ENCODE measurements at regions of chr7 and their contacts with region 1.

Region 1: GRCh38 chr7:107743567-107744344 is at the start of gene CBLL1:
- DNase-seq: peak; percentile 95 to 96
- ATAC-seq: peak; percentile 92 to 95
- H3K4me3 ChIP-seq: peak within 1 kb of the TSS; percentile 75 to 96 (median 91)
- H3K27ac ChIP-seq: peak within 1 kb of the TSS; percentile 92 to 100 (median 95)
- H3K4me1 ChIP-seq: peaks cover 38 to 45% of the 10 kb centered on the region in 2 donors
- H3K27me3 ChIP-seq: no peaks in the 10 kb centered on the region
- CTCF ChIP-seq: peak; percentile 69 to 85 (median 83)
- POLR2A ChIP-seq: peak; percentile 65 to 83
- total RNA-seq, gene CBLL1: 21.6 to 49.6 (median 34.8) TPM

Region 2: DNA sequence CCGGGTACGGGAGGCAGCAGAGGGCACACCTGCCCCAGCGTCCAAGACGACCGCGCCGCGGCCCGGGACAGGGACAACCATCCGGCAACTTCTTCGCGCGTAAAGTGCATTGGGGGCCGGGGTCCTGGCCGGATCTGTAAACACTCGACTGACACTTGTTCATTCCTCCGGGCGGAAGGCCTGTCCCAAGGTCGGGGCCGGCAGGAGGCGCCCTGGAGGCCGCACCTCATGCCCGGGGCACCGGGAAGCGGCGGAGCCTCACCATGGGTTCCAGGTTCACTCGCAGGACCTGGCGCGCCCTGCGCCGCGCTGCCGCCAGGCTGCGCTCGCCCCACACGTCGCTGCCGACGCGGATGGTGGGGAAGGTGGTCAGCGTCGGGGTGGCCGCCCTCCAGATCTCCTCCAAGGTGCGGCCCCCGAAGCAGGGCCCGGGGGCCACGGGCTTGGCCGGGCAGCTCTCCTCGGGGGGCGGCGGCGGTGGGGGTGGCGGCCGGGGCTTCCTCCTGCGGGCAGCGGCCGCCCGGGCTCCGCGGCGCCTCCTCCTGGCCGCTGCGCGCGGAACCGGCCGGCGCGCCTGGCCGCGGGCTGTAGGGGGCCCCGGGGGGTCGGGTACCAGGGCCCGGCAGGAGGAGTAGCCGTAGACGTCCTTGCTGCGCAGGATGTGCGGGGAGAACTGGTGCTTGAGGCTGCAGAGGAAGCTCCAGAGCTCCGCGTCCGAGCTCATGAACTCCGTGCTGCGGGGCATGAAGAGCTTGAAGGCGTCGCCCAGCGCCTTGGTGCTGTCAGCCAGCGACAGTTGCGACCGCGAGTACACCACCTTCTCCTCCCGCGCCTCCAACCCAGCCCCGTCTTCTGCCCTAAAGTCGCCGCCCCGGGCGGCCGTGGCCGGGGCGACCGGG is 1083.5 kb before region 1 on chr7:
- in situ Hi-C with region 1: no loop called
- intact Hi-C with region 1: loop called (anchors 5 kb)
- DNase-seq: peak; percentile 23 to 59
- ATAC-seq: peak; percentile 57 to 66
- H3K4me3 ChIP-seq: peak overlapping the region; percentile 60 to 89 (median 78)
- H3K27ac ChIP-seq: peak overlapping the region; percentile 82 to 91 (median 88)
- H3K4me1 ChIP-seq: peaks cover 8 to 12% of the 10 kb centered on the region in 2 donors
- H3K27me3 ChIP-seq: no peaks in the 10 kb centered on the region
- CTCF ChIP-seq: peak; percentile 49 to 76 (median 67)
- POLR2A ChIP-seq: peak in 1 of 2 donors; percentile 9

Region 3: GRCh38 chr7:107180378-107180777 is 563.4 kb before region 1 on chr7:
- in situ Hi-C with region 1: loop called in 2 of 4 experiments (anchors 25 kb)
- intact Hi-C with region 1: no loop called
- DNase-seq: no peak
- ATAC-seq: no peak
- H3K4me3 ChIP-seq: no peak overlapping the region
- H3K27ac ChIP-seq: peak overlapping the region; percentile 23 to 51 (median 38)
- H3K4me1 ChIP-seq: peaks cover 40 to 42% of the 10 kb centered on the region in 2 donors
- H3K27me3 ChIP-seq: no peaks in the 10 kb centered on the region
- CTCF ChIP-seq: no peak
- POLR2A ChIP-seq: no peak

Region 4: DNA sequence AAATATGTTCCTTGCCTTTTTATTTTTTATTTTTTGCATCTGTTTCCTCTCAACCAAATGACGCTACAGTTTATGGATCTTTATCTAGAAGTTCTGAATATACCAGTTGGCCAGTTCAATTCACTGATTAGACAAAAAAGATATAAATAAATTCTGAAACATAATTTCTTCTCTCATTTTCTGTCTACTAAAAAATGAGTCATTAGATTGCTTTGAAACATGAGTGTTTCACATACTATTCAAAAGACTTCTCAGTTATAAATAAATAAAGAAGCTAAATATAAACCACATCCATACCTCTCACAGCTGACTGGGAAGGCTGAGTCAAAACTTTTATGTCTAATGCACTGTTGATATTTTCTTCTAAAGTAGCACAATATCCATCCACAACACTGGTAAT is 371.5 kb before region 1 on chr7:
- in situ Hi-C with region 1: no loop called
- intact Hi-C with region 1: no loop called
- DNase-seq: no peak
- ATAC-seq: peak; percentile 82 to 97
- H3K4me3 ChIP-seq: no peak overlapping the region
- H3K27ac ChIP-seq: peak overlapping the region in 3 of 4 donors; percentile 31 to 49 (median 44)
- H3K4me1 ChIP-seq: peaks cover 0 to 11% of the 10 kb centered on the region in 2 donors
- H3K27me3 ChIP-seq: no peaks in the 10 kb centered on the region
- CTCF ChIP-seq: no peak
- POLR2A ChIP-seq: no peak

Region 5: DNA sequence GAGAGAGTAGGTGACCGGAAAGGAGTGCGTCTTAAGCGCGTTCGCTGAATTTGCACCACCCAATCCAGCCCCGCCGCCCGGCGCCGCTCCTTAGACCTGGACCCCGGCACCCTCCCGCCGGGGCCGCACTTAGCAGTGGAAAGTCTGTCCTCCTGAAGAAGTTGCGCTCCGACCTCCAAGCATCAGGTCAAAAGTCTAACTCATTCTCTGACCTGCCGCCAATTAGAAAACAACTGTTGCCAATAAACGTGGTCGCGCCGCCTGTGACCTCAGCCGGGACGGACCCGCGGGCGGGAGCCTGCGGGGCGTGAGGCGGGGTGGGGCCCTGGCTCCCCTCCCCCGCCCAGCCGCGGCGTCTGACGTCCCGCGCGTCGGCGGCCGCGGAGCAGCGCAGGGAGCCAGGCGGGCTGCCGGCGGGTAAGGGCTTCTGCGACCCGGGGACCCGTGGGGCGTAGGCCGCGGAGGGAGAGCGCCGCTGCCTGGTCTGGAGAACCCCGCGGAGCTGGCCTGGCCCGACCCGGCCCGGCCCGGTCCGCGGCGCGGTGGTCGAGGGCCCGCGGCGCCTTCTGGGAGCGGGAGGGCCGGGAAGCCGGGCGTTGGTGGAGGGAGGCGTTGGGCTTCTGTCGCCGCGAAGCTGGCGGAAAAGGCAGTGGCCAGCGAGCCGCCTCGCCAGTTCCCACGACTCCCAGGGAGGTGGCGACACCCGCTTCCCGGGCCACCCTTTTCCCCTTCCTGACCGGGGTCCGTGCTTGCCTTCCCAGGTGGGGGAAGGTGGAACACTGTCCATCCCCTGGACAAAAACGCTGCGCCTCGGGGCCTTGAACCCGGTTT is 163.7 kb before region 1 on chr7 and contains the start of gene BCAP29:
- in situ Hi-C with region 1: no loop called
- intact Hi-C with region 1: loop called (anchors 1 kb)
- DNase-seq: peak; percentile 59 to 79
- ATAC-seq: peak; percentile 86 to 87
- H3K4me3 ChIP-seq: peak within 1 kb of the TSS; percentile 68 to 82 (median 82)
- H3K27ac ChIP-seq: peak within 1 kb of the TSS; percentile 89 to 95 (median 92)
- H3K4me1 ChIP-seq: peaks cover 10 to 12% of the 10 kb centered on the region in 2 donors
- H3K27me3 ChIP-seq: no peaks in the 10 kb centered on the region
- CTCF ChIP-seq: peak in 4 of 5 experiments; percentile 32 to 57 (median 39)
- POLR2A ChIP-seq: peak; percentile 94 to 95
- total RNA-seq, gene BCAP29: 125 to 152 (median 129) TPM

Region 6: DNA sequence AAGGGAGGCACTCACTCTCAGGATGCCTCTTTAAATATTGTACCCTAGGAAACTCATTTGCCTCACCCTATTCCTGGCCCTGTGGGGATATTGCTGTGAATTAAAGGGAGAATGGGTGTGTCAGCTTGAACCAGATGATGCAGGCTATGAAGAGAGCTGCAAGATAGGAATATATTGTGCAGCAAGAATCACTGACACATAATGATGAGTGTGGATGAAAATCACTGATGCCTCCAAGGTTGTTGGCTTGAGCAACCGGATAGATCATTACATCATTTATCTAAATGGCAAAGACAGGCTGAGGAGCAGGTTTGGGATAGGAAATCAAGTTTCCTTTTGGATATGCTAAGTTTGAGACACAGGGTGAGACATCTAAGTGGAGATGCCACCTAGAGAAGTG is 77.0 kb before region 1 on chr7:
- in situ Hi-C with region 1: no loop called
- intact Hi-C with region 1: no loop called
- DNase-seq: no peak
- ATAC-seq: no peak
- H3K4me3 ChIP-seq: no peak overlapping the region
- H3K27ac ChIP-seq: no peak overlapping the region
- H3K4me1 ChIP-seq: peaks cover 0 to 3% of the 10 kb centered on the region in 2 donors
- H3K27me3 ChIP-seq: peaks cover 0 to 4% (median 3%) of the 10 kb centered on the region in 3 donors
- CTCF ChIP-seq: no peak
- POLR2A ChIP-seq: no peak

Region 7: GRCh38 chr7:107890962-107891635 is 147.3 kb after region 1 on chr7 and contains the start of gene DLD:
- in situ Hi-C with region 1: no loop called
- intact Hi-C with region 1: loop called (anchors 1 kb)
- DNase-seq: peak; percentile 89 to 92
- ATAC-seq: peak; percentile 98
- H3K4me3 ChIP-seq: peak within 1 kb of the TSS; percentile 68 to 90 (median 84)
- H3K27ac ChIP-seq: peak within 1 kb of the TSS; percentile 93 to 98 (median 96)
- H3K4me1 ChIP-seq: peaks cover 36 to 42% of the 10 kb centered on the region in 2 donors
- H3K27me3 ChIP-seq: no peaks in the 10 kb centered on the region
- CTCF ChIP-seq: no peak
- POLR2A ChIP-seq: peak; percentile 88 to 91
- total RNA-seq, gene DLD: 110 to 157 (median 146) TPM

Measured in gastrocnemius medialis (tissue), 4 donors.